ENCODE measurements at regions of chr17 and their contacts with region 1.

Region 1: GRCh38 chr17:51245535-51245934 is 14.3 kb downstream of the MBTD1 start:
- DNase-seq: no peak
- ATAC-seq: no peak
- H3K4me3 ChIP-seq: no peak overlapping the region
- H3K4me3 Mint-ChIP-seq: no peak overlapping the region
- H3K27ac ChIP-seq: no peak overlapping the region
- H3K27ac Mint-ChIP-seq: no peak overlapping the region
- H3K4me1 ChIP-seq: no peaks in the 10 kb centered on the region
- H3K4me1 Mint-ChIP-seq: peaks cover 25% of the 10 kb centered on the region
- H3K27me3 ChIP-seq: no peaks in the 10 kb centered on the region
- H3K27me3 Mint-ChIP-seq: no peaks in the 10 kb centered on the region
- CTCF ChIP-seq: no peak

Region 2: GRCh38 chr17:51228161-51228560 is 17.4 kb before region 1 on chr17:
- CTCF ChIA-PET with region 1: no interaction called
- POLR2A ChIA-PET with region 1: interaction called, 3 read pairs
- intact Hi-C with region 1: loop called in 1 of 2 experiments (anchors 2 kb)
- DNase-seq: no peak
- ATAC-seq: no peak
- H3K4me3 ChIP-seq: no peak overlapping the region
- H3K4me3 Mint-ChIP-seq: no peak overlapping the region
- H3K27ac ChIP-seq: no peak overlapping the region
- H3K27ac Mint-ChIP-seq: no peak overlapping the region
- H3K4me1 ChIP-seq: no peaks in the 10 kb centered on the region
- H3K4me1 Mint-ChIP-seq: peaks cover 41% of the 10 kb centered on the region
- H3K27me3 ChIP-seq: no peaks in the 10 kb centered on the region
- H3K27me3 Mint-ChIP-seq: no peaks in the 10 kb centered on the region
- CTCF ChIP-seq: no peak